ENCODE measurements at regions of chr5 and their contacts with region 1.

Region 1: GRCh38 chr5:32232441-32233219 is 58.5 kb upstream of the GOLPH3 start:
- DNase-seq: peak; percentile 61
- H3K4me3 Mint-ChIP-seq: no peak overlapping the region
- H3K27ac Mint-ChIP-seq: peak overlapping the region; percentile 47
- H3K4me1 Mint-ChIP-seq: peaks cover 26% of the 10 kb centered on the region
- H3K27me3 Mint-ChIP-seq: peaks cover 1% of the 10 kb centered on the region

Region 2: DNA sequence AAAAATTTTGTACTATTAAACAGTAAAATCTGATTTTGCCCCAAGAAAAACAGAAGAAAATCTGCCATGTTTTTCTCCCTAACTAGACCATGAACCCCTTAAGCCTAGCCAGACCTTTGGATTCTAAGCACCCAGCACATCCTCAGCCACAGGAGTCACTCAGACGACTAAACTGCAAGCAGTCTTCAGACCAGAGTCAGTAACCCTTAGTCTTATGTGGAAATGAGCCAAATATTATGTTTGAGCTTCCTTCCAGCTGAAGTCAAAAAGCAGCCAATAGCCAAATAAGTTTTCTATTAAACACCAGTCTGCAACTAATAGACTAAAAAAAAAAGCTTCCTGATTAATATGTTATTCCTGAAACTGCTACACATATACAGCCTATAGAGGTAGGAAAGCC is 105.9 kb before region 1 on chr5:
- intact Hi-C with region 1: no loop called
- DNase-seq: no peak
- H3K4me3 Mint-ChIP-seq: no peak overlapping the region
- H3K27ac Mint-ChIP-seq: no peak overlapping the region
- H3K4me1 Mint-ChIP-seq: peaks cover 31% of the 10 kb centered on the region
- H3K27me3 Mint-ChIP-seq: no peaks in the 10 kb centered on the region

Region 3: DNA sequence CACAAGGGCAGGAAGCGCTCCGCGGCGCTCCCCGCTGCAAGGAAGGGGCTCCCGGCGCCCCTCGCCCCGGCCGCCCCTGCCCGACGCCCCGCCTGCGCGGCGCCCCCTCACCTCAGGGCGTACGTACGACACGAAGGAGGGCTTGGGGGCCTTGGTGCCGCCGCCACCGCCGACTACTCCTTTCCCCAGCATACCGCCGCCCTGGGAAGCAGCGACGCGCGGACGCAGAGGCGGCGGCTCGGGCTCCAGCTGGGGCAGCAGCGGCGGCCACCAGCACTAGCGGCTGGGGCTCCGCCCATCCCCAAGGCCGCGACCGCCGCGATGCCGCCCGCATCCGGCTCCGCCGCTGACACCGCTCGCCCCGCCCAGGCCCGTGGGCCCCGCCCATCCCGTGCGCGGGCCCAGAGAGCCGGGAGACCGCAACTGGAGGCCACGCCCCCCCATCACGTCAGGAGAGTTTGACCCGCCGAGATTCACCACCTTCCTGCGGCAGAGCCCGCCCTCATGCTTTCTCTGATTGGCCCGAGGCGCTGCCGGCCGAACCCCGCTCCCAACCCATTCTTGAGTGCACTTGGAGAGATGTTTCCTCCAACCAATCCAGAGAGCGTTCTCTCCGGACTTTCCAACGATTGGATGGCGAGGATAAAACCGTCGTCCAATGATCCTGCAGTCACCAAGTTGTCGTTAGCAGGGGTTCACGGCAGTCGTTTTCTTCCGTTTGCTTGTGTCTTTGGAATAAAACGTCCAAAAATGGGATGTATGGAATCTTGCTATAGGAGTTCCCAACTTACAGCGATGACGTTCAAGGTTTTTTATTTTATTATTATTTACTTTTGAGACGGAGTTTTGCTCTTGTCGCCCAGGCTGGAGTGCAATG is 80.3 kb after region 1 on chr5 and contains the start of gene MTMR12:
- intact Hi-C with region 1: loop called (anchors 1 kb)
- DNase-seq: peak; percentile 100
- H3K4me3 Mint-ChIP-seq: peak within 1 kb of the TSS; percentile 96
- H3K27ac Mint-ChIP-seq: peak within 1 kb of the TSS; percentile 95
- H3K4me1 Mint-ChIP-seq: peaks cover 38% of the 10 kb centered on the region
- H3K27me3 Mint-ChIP-seq: no peaks in the 10 kb centered on the region
- total RNA-seq, gene MTMR12: 26.2 and 29.9 TPM in 2 replicates

Region 4: DNA sequence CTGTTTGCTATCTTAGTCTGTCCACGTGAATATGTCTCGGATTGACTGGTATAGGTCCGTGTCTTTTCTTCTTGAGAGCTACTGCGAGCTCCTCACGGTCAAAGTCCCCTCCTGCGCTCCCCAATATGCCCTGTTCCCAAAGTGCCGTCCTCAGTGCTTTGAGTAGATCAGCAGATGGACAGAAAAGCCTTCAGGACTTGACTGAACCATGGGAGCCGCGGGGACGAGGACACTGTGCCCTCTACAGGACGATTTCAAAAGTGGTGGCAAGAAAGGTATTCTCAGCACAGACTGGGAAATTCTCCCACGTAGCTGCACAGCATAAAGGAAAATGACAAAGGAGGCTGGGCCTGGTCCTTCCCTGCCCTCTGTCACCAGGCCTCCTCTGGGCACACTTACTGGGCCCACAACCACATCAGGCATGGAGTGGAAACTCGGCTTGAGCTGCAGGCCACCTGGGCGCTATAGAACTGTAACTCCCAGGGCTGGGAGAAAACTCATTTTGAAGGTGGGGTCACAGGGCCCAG is 96.7 kb after region 1 on chr5:
- intact Hi-C with region 1: loop called (anchors 1 kb)
- DNase-seq: peak; percentile 40
- H3K4me3 Mint-ChIP-seq: no peak overlapping the region
- H3K27ac Mint-ChIP-seq: no peak overlapping the region
- H3K4me1 Mint-ChIP-seq: peaks cover 4% of the 10 kb centered on the region
- H3K27me3 Mint-ChIP-seq: no peaks in the 10 kb centered on the region

Region 5: DNA sequence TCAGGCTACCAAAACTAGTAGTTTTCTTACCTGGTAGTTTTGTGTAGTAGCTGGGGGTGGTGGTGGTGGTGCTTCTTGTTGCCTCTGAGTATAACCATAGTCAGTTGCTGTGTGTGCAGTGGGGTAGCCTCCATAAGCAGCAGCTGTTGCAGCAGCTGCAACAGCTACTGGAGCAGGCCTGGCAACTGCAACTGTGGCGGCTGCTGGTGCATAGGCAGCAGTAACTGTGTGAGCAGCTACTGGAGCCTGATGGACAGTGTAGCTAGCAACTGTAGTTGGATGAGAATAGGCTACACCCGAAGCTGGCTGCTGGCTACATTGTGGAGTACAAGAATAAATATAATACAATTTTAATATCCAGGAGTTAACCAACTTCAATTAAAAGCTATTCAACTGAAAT is 187.2 kb after region 1 on chr5:
- intact Hi-C with region 1: no loop called
- DNase-seq: no peak
- H3K4me3 Mint-ChIP-seq: no peak overlapping the region
- H3K27ac Mint-ChIP-seq: no peak overlapping the region
- H3K4me1 Mint-ChIP-seq: peaks cover 23% of the 10 kb centered on the region
- H3K27me3 Mint-ChIP-seq: no peaks in the 10 kb centered on the region

Measured in activated T-helper 1 cell treated with anti-CD3 and anti-CD28 coated beads, Interleukin-12 subunit alpha, Interleukin-12 subunit beta, Interleukin-2, Interleukin-4 antibody, amounts not matched to agents 30 ng/mL and 10 ng/mL and 1 ng/mL, durations not matched to agents 14 hours and 24 hours and 36 hours (primary cell).